ENCODE measurements at regions of chr5 and their contacts with region 1.

Region 1: DNA sequence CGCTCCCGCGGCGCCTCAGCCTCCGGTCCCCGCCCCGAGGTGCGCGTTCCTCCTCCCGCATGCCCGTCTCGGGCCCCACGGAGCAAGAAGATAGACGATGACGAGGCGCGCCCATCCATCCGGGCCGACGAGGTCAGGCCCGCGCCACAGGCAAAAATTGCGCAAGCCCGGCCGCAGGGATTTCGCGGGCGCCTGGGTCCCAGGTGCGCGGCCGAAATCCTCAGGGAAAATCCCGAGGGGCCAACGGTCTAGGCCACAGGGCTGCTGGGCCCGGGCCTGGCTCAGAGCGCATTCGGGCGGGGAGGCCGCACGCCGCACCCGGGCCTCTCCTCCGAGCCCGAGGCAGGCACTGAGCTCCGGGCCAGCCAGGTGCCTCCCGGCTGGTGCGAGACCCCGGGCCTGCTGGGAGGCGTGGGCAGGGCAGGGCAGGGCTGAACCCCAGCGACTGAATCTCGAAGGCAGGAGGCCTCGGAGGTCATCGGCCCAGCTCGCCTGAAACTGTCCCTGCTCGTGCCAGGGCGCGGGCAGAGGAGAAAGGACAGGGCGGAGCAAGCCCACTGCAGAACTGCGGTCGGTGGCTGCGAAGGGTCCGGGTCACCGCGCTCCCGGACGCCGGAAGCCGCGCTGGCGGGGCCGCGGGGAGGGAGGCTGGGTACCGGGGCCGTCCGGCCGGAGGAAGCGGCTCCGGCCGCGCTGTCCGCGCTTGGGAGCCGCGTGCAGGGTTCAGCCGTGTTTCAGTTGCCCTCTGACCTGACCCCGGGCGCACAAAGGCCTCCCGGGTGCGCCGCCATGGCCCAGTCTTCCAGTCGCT is 66.8 kb downstream of the FOXD1 start:
- DNase-seq: no peak
- H3K4me3 Mint-ChIP-seq: no peak overlapping the region
- H3K27ac Mint-ChIP-seq: no peak overlapping the region
- H3K4me1 Mint-ChIP-seq: peaks cover 3% of the 10 kb centered on the region
- H3K27me3 Mint-ChIP-seq: peaks cover 65% of the 10 kb centered on the region

Region 2: DNA sequence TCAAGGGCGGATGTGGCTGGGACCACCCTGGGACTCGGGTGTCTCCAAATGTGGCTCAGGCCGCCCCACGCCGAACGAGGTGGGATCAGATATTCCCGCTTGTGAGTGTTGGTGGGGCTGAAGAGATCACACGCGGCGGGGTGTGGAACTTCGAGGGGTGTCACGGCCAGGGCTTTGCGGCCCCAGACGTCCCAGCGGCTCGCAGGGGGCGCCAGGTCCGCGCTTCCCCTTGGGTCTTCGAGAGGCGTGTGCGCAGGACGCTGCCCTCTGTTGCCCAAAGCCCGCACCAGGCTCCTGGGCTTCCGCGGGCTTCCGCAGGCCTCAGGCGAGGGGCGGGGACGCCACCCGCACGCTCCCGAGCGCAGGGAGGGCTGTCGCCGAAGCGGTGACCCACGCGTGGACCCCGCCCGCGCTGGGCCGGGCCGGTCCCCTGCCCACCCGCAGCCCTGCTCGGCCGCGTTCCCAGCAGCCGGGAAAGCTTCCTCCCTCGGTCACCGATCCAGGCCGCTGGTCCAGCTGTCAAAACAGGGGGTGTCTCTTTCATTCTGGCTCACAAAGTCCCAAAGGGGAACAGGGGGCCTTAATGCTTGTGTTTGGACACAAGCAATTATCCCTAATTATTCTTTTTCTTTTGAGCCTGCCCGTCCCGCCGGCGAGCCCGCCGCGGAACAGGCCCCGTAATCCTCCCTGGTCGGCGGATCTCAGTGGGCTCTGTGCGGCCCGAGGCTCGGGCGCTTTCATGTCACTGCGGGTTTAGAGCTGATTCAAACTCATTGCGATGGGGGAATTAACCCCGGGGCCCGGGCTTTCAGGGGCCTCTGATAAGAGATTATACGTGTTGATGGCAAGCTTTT is 148.2 kb before region 1 on chr5:
- intact Hi-C with region 1: loop called (anchors 5 kb)
- DNase-seq: no peak
- H3K4me3 Mint-ChIP-seq: no peak overlapping the region
- H3K27ac Mint-ChIP-seq: no peak overlapping the region
- H3K4me1 Mint-ChIP-seq: peaks cover 1% of the 10 kb centered on the region
- H3K27me3 Mint-ChIP-seq: peaks cover 68% of the 10 kb centered on the region

Region 3: GRCh38 chr5:73419465-73420390 is 37.9 kb after region 1 on chr5:
- intact Hi-C with region 1: loop called (anchors 5 kb)
- DNase-seq: no peak
- H3K4me3 Mint-ChIP-seq: no peak overlapping the region
- H3K27ac Mint-ChIP-seq: no peak overlapping the region
- H3K4me1 Mint-ChIP-seq: peaks cover 2% of the 10 kb centered on the region
- H3K27me3 Mint-ChIP-seq: peaks cover 77% of the 10 kb centered on the region